ENCODE measurements at regions of chr2 and their contacts with region 1.

Region 1: DNA sequence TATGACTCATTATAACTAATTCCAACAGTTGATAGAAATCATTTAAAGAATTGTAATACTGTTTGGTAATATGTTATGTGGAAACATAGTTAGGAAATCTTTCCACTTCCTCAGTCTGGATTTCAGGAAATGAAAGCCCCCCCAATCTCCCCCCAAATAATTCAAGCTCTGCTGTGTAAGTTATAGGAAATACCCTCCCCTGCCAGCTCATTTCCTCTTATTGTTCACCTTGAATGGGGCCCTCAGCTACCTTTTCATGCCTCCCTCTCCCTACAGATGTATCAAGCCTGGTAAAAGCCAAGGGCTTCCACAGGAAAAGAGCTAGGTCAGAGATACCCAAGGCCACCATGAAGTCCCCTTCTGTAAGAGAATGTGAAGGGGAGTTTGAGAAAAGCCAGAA is 155.5 kb downstream of the CNTNAP5 start:
- ATAC-seq: no peak
- H3K4me3 ChIP-seq: no peak overlapping the region
- H3K27ac ChIP-seq: no peak overlapping the region
- H3K4me1 ChIP-seq: no peaks in the 10 kb centered on the region

Region 2: DNA sequence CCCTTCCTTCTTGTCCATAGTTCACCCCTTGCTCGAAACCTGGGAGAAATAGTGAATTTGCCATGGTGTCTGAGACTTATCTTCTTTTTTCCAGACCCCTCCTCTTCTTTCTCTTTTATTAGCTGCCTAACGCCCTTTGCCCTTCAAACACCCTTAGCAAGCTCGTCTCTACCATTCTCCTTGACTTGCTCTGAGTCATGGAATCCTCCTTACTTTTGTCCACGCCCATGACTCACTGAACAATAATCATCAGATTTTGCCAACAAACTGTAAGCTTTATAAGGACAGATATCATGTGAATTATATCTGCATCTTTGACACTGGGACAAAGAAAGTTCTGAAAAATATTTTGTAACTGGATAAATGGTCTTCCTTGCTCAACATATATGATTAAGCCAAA is 222.6 kb before region 1 on chr2:
- in situ Hi-C with region 1: no loop called
- ATAC-seq: peak in 1 of 8 experiments; percentile 59
- H3K4me3 ChIP-seq: no peak overlapping the region
- H3K27ac ChIP-seq: no peak overlapping the region
- H3K4me1 ChIP-seq: no peaks in the 10 kb centered on the region

Region 3: GRCh38 chr2:124283113-124283512 is 102.5 kb after region 1 on chr2:
- in situ Hi-C with region 1: loop called in 1 of 9 experiments (anchors 25 kb)
- ATAC-seq: no peak
- H3K4me3 ChIP-seq: no peak overlapping the region
- H3K27ac ChIP-seq: no peak overlapping the region
- H3K4me1 ChIP-seq: no peaks in the 10 kb centered on the region